PC-3 (cell line): ENCODE measurements at regions of chr12 and their contacts with region 1.

Region 1: GRCh38 chr12:45728630-45729232 is 775 bp upstream of the ARID2 start:
- DNase-seq: peak; percentile 93
- ATAC-seq: peak; percentile 54
- H3K4me3 ChIP-seq: peak overlapping the region; percentile 87
- H3K27ac ChIP-seq: peak overlapping the region; percentile 82
- H3K4me1 ChIP-seq: peaks cover 34% of the 10 kb centered on the region
- H3K27me3 ChIP-seq: no peaks in the 10 kb centered on the region
- CTCF ChIP-seq: peak; percentile 80

Region 2: GRCh38 chr12:45170456-45171042 is 558.2 kb before region 1 on chr12:
- CTCF ChIA-PET with region 1: no interaction called
- POLR2A ChIA-PET with region 1: no interaction called
- intact Hi-C with region 1: loop called (anchors 5 kb)
- DNase-seq: peak; percentile 85
- ATAC-seq: peak; percentile 84
- H3K4me3 ChIP-seq: no peak overlapping the region
- H3K27ac ChIP-seq: no peak overlapping the region
- H3K4me1 ChIP-seq: no peaks in the 10 kb centered on the region
- H3K27me3 ChIP-seq: no peaks in the 10 kb centered on the region
- CTCF ChIP-seq: peak; percentile 95

Region 3: GRCh38 chr12:45268672-45269411 is 459.9 kb before region 1 on chr12:
- CTCF ChIA-PET with region 1: no interaction called
- POLR2A ChIA-PET with region 1: no interaction called
- intact Hi-C with region 1: loop called (anchors 2 kb)
- DNase-seq: peak; percentile 95
- ATAC-seq: peak; percentile 73
- H3K4me3 ChIP-seq: peak overlapping the region; percentile 41
- H3K27ac ChIP-seq: peak overlapping the region; percentile 88
- H3K4me1 ChIP-seq: peaks cover 32% of the 10 kb centered on the region
- H3K27me3 ChIP-seq: no peaks in the 10 kb centered on the region
- CTCF ChIP-seq: peak; percentile 87

Region 4: DNA sequence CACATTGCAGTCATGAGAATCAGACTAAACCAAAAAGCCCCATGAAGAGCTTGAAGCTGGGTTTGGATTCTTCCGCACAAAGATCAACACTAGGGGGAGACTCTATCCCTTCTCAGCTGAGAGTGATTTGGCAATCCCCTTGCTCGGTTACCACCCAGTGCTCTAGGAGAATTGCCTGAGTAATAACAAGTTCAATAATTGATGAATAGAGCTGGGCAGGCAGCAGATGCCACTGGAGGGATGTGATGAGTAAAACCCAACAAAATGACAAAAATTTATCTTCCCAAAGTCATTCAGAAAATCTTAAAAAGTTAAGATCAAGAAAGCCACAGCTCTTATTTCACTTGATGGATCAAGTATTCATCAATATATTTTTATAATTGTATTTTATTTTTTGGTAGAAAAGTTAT is 184.8 kb before region 1 on chr12:
- CTCF ChIA-PET with region 1: interaction called, 16 read pairs
- POLR2A ChIA-PET with region 1: interaction called, 4 read pairs
- intact Hi-C with region 1: loop called (anchors 1 kb)
- DNase-seq: peak; percentile 84
- ATAC-seq: peak; percentile 91
- H3K4me3 ChIP-seq: no peak overlapping the region
- H3K27ac ChIP-seq: no peak overlapping the region
- H3K4me1 ChIP-seq: no peaks in the 10 kb centered on the region
- H3K27me3 ChIP-seq: no peaks in the 10 kb centered on the region
- CTCF ChIP-seq: peak; percentile 90

Region 5: DNA sequence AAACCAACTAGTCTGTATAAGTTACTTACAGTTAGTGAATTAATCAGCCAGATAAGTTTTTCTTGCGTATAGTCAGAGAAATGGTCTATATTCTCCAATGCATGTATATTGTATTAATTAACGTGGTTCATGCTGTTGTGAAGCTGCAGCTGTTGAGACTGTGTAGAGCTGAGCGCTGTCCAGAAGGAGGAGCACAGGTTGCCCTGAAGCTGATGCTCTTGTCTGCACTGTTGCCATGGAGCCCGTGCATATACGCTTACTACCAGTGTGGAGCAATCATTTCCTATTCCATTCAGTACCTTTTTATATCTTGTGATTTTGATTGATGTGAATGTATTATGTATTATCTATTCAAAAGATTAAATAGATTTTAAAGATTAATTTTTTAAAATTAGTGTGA is 73.5 kb before region 1 on chr12:
- CTCF ChIA-PET with region 1: no interaction called
- POLR2A ChIA-PET with region 1: no interaction called
- intact Hi-C with region 1: loop called (anchors 5 kb)
- DNase-seq: peak; percentile 54
- ATAC-seq: peak; percentile 98
- H3K4me3 ChIP-seq: no peak overlapping the region
- H3K27ac ChIP-seq: no peak overlapping the region
- H3K4me1 ChIP-seq: no peaks in the 10 kb centered on the region
- H3K27me3 ChIP-seq: no peaks in the 10 kb centered on the region
- CTCF ChIP-seq: peak; percentile 43; the same call in 1 of the 2 replicates